Body of pancreas (tissue), 4 donors: ENCODE measurements at regions of chrX and their contacts with region 1.

Region 1: GRCh38 chrX:49915361-49916222 is 6.8 kb upstream of the CLCN5 start:
- DNase-seq: peak; percentile 44 to 65 (median 54)
- ATAC-seq: peak; percentile 62
- H3K4me3 ChIP-seq: no peak overlapping the region
- H3K27ac ChIP-seq: no peak overlapping the region
- H3K4me1 ChIP-seq: peaks cover 9% of the 10 kb centered on the region
- H3K27me3 ChIP-seq: no peaks in the 10 kb centered on the region
- CTCF ChIP-seq: peak; percentile 49 to 84 (median 67)
- POLR2A ChIP-seq: no peak

Region 2: GRCh38 chrX:50442426-50443116 is 527.0 kb after region 1 on chrX:
- intact Hi-C with region 1: no loop called
- DNase-seq: no peak
- ATAC-seq: no peak
- H3K4me3 ChIP-seq: no peak overlapping the region
- H3K27ac ChIP-seq: no peak overlapping the region
- H3K4me1 ChIP-seq: no peaks in the 10 kb centered on the region
- H3K27me3 ChIP-seq: no peaks in the 10 kb centered on the region
- CTCF ChIP-seq: no peak
- POLR2A ChIP-seq: no peak

Region 3: GRCh38 chrX:50579955-50580354 is 664.4 kb after region 1 on chrX:
- intact Hi-C with region 1: loop called (anchors 10 kb)
- DNase-seq: peak; percentile 25 to 63 (median 47)
- ATAC-seq: no peak
- H3K4me3 ChIP-seq: no peak overlapping the region
- H3K27ac ChIP-seq: no peak overlapping the region
- H3K4me1 ChIP-seq: no peaks in the 10 kb centered on the region
- H3K27me3 ChIP-seq: no peaks in the 10 kb centered on the region
- CTCF ChIP-seq: peak in 6 of 7 experiments; percentile 29 to 68 (median 50)
- POLR2A ChIP-seq: no peak